ENCODE measurements at regions of chr3 and their contacts with region 1.

Region 1: GRCh38 chr3:69091389-69092029 is 6.8 kb downstream of the ARL6IP5 start:
- DNase-seq: no peak
- H3K4me3 ChIP-seq: no peak overlapping the region
- H3K27ac ChIP-seq: no peak overlapping the region
- H3K4me1 ChIP-seq: peaks cover 12% of the 10 kb centered on the region
- H3K27me3 ChIP-seq: no peaks in the 10 kb centered on the region
- CTCF ChIP-seq: no peak

Region 2: DNA sequence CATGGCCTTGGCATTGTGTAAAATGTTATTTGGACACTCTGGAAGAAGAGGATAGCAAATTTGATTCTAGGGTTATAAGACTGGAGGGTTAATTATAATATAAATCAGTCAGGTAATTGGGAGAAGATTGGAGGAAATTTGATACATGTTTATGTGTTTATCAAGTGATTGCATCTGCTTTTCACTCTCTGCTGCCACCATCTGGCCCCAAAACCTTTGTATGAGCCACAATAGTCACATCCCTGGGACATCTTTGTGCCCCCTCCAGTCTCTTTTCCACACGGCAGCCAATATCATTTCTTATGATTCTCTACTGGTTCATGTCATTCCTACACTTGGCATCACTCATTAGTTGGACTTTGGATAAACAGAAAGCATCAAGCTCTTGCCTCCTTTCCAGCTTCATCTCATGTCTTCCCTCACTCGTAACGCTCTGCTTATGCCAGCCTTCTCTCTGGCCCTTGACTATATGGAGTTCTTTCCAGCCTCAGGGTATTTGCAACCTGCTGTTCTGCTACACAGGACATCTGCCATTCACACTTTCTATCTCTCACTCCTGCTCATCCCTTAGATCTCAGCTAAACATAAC is 834.8 kb before region 1 on chr3:
- CTCF ChIA-PET with region 1: no interaction called
- POLR2A ChIA-PET with region 1: no interaction called
- intact Hi-C with region 1: no loop called
- DNase-seq: peak; percentile 0
- H3K4me3 ChIP-seq: no peak overlapping the region
- H3K27ac ChIP-seq: no peak overlapping the region
- H3K4me1 ChIP-seq: no peaks in the 10 kb centered on the region
- H3K27me3 ChIP-seq: no peaks in the 10 kb centered on the region
- CTCF ChIP-seq: peak; percentile 32; the same call in 1 of the 2 replicates

Region 3: DNA sequence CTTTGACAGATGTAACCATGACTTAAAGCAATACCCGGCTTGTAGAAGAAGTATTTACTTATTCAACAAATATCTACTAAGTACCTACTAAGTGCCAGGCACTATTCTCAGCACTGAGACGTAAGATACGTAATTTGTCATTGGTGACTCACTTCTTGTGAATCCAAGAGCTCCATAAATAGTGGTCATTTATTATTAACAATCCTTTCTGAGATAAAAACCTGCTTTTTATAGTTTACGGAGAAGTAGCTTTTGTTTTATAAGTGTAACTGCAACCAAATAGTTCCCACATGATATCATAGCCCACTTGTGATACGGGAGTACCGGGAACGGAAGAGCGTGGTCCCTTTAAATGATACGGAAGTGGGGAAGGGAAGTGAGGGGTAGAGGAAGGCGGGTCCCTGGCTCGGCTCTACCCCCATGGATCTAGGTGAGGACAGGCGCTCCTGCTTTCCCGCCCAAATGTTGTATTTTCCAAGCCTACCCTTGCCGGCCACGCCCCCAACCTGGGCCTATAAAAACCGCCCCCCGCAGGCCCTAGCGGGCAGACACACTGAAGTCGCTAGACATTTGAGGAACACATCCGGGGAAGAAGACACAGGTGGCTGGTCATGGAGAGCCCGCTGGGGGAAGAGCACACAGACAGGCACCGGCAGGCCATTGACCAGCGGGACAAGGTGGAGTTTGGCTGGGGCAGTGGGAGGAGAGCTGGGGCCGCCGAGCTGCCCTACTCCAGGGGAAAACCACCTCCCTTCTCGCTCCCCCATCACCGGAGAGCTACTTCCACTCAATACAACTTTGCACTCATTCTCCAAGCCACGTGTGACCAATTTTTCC is 907.9 kb after region 1 on chr3 and contains the start of gene SAMMSON:
- CTCF ChIA-PET with region 1: no interaction called
- POLR2A ChIA-PET with region 1: interaction called, 10 read pairs
- intact Hi-C with region 1: no loop called
- DNase-seq: peak; percentile 3
- H3K4me3 ChIP-seq: peak within 1 kb of the TSS; percentile 12
- H3K27ac ChIP-seq: peak within 1 kb of the TSS; percentile 19
- H3K4me1 ChIP-seq: peaks cover 11% of the 10 kb centered on the region
- H3K27me3 ChIP-seq: no peaks in the 10 kb centered on the region
- CTCF ChIP-seq: no peak
- total RNA-seq, gene SAMMSON: not detected in 2 replicates

Measured in A673 (cell line).